GM10248 (cell line): ENCODE measurements at regions of chr11 and their contacts with region 1.

Region 1: GRCh38 chr11:123628936-123629683 is 25.3 kb downstream of the SCN3B start:
- DNase-seq: no peak
- CTCF ChIP-seq: no peak

Region 2: DNA sequence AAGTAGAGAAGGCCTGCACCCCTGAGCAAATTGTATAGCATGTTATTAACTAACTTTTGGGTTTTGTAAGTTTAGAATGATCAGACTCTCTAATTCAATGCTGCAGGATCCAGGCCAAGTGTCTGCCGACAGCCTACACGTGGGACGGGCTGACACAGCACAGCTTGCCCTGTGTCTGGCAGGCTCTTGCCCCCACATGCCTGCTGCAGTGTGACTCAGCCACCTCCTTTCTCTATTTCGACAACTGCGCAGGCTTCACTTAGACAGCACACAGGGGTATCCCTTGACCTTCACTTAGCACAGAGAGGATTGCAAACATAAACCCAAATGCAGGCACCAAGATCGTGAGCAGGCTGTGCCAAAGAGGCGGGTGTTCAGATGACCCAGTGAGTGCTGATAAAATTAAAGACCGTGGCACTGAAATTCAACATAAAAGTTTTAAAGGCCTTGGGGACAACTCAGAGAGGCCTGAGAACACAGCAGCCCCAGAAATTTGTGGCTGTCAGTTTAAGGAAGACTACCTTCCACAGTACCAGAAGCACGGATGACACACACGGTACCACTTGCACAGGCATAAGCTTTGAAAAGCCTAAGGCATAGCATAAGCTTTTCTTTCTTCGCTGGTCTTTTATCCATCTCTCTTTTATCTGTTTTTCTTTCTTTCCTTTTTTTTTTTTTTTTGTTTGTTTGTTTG is 12.5 kb before region 1 on chr11:
- CTCF ChIA-PET with region 1: interaction called, 10 read pairs
- POLR2A ChIA-PET with region 1: interaction called, 3 read pairs
- DNase-seq: no peak
- CTCF ChIP-seq: no peak